Esophagus squamous epithelium (tissue), 5 donors: ENCODE measurements at regions of chr16 and their contacts with region 1.

Region 1: DNA sequence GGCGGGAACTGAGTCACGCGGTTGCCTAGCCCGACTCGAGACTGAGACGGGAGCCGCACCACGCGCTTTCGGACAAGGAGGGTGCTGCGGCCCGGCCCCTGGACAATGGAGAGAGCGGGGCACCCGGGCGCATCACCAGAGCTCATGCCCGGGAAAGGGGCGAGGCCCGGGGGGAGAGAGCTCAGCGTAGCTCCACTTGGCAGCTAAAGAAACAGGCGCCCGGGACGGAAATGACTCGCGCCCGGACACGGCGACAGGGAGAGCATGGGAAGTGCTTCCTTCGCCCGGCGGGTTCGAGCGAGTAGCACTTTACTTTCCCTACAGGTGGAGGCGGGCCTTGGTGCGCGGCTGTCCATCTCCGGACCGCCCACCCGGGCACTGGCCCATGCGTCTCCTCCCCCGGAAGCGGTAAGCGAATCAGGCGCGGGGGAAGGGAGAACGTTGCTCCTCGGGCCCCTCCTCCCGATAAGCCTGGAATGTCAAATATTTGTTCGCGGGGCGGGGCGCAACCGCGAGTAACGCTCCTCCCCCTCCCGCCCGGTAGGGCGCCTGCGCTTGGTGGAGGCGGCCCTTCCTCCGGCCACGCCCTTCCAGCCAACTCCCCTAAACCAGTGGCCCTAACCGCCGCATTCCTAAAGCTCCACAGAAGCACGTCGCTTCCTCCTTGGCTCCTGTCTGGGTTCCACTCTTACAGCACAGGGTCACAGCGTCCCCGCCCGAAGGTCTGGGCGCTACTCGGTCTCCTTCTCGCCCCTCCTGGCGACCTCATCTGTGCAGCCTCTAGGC is 1.5 kb upstream of the ESRP2 start:
- DNase-seq: peak; percentile 62
- H3K4me3 ChIP-seq: peak overlapping the region; percentile 62 to 76 (median 70)
- H3K27ac ChIP-seq: peak overlapping the region; percentile 88 to 98 (median 92)
- H3K4me1 ChIP-seq: peaks cover 20 to 65% (median 22%) of the 10 kb centered on the region in 3 donors
- H3K27me3 ChIP-seq: no peaks in the 10 kb centered on the region
- CTCF ChIP-seq: peak in 2 of 6 experiments; percentile 1 to 5
- POLR2A ChIP-seq: peak in 3 of 4 donors; percentile 54 to 79 (median 77)

Region 2: GRCh38 chr16:68085259-68086071 is 152.0 kb before region 1 on chr16 and contains the start of gene NFATC3:
- intact Hi-C with region 1: loop called (anchors 10 kb)
- DNase-seq: peak; percentile 93
- H3K4me3 ChIP-seq: peak within 1 kb of the TSS; percentile 72 to 89 (median 83)
- H3K27ac ChIP-seq: peak within 1 kb of the TSS; percentile 91 to 99 (median 98)
- H3K4me1 ChIP-seq: peaks cover 27 to 83% (median 28%) of the 10 kb centered on the region in 3 donors
- H3K27me3 ChIP-seq: no peaks in the 10 kb centered on the region
- CTCF ChIP-seq: peak in 2 of 6 experiments; percentile 4 to 21
- POLR2A ChIP-seq: peak in 2 of 4 donors; percentile 66 to 79
- total RNA-seq, gene NFATC3: 18.6 to 30.9 (median 20.5) TPM